ENCODE measurements at regions of chr1 and their contacts with region 1.

Region 1: DNA sequence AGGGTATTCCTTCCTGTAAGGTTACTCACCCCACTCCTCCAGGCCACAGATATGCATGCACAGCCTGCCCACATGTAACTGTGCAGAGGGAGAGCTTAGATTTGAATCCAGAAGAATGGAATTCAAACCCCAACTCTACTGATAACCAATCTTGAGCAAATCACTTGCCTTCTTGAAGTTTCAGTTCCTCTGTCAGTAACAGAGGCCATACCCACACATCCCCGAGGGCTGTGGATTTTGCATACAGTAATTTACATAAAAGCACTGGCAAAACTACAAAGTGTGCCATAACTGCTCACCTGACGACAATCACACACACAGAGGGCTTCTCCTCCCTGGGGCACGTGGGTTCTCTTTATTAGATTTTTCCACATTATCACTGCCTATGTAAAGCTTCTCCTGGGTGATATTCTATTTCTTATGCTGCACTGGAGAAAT is 18.6 kb downstream of the CD247 start:
- DNase-seq: no peak
- H3K4me3 Mint-ChIP-seq: peak overlapping the region; percentile 55
- H3K27ac Mint-ChIP-seq: peak overlapping the region; percentile 95
- H3K4me1 Mint-ChIP-seq: peaks cover 99% of the 10 kb centered on the region
- H3K27me3 Mint-ChIP-seq: no peaks in the 10 kb centered on the region

Region 2: DNA sequence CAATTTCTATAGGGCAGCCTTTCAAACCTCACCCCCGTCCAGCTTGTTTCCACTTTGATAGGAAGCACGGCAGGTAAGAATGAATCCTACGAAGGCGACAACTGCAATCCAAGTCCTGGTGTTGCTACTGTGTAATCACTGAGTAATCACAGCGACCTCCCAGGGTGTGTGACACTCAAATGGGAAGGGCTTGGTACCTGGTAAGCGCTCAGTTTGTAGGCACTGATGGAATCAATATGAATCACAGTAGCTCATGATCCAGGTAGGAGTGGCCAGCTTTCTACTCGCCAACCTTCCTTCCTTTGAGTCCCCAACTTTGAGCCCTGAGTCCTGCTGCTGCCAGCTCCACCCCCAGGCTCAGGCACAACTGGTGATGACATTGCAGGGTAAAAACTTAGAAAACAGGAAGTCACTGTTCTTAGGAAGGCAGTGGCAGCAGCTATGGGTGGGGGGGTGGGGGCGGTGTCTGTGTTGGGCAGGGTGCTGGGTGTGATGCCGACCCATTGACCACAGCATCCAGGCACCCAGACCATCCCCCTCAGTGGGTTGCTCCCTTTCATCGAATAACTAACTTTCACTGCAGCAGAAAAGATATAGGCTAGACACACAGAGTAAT is 52.1 kb before region 1 on chr1:
- intact Hi-C with region 1: loop called (anchors 1 kb)
- DNase-seq: peak; percentile 70
- H3K4me3 Mint-ChIP-seq: peak overlapping the region; percentile 68
- H3K27ac Mint-ChIP-seq: peak overlapping the region; percentile 90
- H3K4me1 Mint-ChIP-seq: peaks cover 77% of the 10 kb centered on the region
- H3K27me3 Mint-ChIP-seq: no peaks in the 10 kb centered on the region

Region 3: DNA sequence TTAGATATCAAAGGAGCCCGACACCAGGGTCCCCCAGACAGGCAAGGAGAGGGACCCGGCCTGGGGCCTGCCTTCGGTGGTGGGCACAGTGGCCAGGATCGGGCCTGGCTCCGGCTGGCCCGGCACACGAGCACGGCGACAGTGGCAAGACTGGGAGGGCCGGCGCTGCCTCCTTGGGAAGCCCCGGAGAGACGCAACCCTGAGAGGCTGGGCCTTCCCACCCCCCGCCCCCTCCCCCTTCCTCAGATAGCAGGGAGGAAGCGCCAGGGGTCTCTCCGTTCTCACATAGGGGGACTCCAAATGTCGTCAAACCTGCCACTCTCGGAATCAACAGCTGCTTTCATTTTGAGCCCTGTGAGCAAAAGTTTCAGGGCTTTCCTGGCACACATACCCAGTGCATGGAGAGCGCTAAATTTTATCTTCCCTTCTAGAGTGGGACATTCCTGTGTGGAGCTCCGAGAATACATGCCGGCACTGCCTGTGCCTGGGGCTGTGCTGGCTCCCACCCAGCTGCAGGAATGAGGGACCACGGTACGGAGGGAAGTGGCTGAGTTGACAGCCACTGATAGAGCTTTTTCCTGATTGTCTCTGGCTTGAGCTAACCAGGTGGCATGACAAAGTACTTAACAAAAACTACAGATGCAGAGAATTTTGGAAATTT is 43.8 kb before region 1 on chr1:
- intact Hi-C with region 1: loop called (anchors 1 kb)
- DNase-seq: peak; percentile 36
- H3K4me3 Mint-ChIP-seq: peak overlapping the region; percentile 81
- H3K27ac Mint-ChIP-seq: peak overlapping the region; percentile 86
- H3K4me1 Mint-ChIP-seq: peaks cover 56% of the 10 kb centered on the region
- H3K27me3 Mint-ChIP-seq: no peaks in the 10 kb centered on the region

Region 4: GRCh38 chr1:167474191-167474716 is 25.4 kb before region 1 on chr1:
- intact Hi-C with region 1: loop called (anchors 1 kb)
- DNase-seq: no peak
- H3K4me3 Mint-ChIP-seq: peak overlapping the region; percentile 54
- H3K27ac Mint-ChIP-seq: peak overlapping the region; percentile 81
- H3K4me1 Mint-ChIP-seq: peaks cover 72% of the 10 kb centered on the region
- H3K27me3 Mint-ChIP-seq: no peaks in the 10 kb centered on the region

Region 5: GRCh38 chr1:167486090-167486824 is 13.4 kb before region 1 on chr1:
- intact Hi-C with region 1: loop called (anchors 1 kb)
- DNase-seq: no peak
- H3K4me3 Mint-ChIP-seq: peak overlapping the region; percentile 66
- H3K27ac Mint-ChIP-seq: peak overlapping the region; percentile 88
- H3K4me1 Mint-ChIP-seq: peaks cover 93% of the 10 kb centered on the region
- H3K27me3 Mint-ChIP-seq: no peaks in the 10 kb centered on the region

Region 6: GRCh38 chr1:167627865-167628641 is 128.4 kb after region 1 on chr1:
- intact Hi-C with region 1: loop called (anchors 5 kb)
- DNase-seq: peak; percentile 82
- H3K4me3 Mint-ChIP-seq: peak overlapping the region; percentile 85
- H3K27ac Mint-ChIP-seq: peak overlapping the region; percentile 89
- H3K4me1 Mint-ChIP-seq: peaks cover 70% of the 10 kb centered on the region
- H3K27me3 Mint-ChIP-seq: no peaks in the 10 kb centered on the region

Measured in activated T-helper 1 cell treated with anti-CD3 and anti-CD28 coated beads, Interleukin-12 subunit alpha, Interleukin-12 subunit beta, Interleukin-2, Interleukin-4 antibody, amounts not matched to agents 30 ng/mL and 10 ng/mL and 1 ng/mL, durations not matched to agents 14 hours and 24 hours and 36 hours (primary cell).